ENCODE measurements at regions of chr19 and their contacts with region 1.

Region 1: DNA sequence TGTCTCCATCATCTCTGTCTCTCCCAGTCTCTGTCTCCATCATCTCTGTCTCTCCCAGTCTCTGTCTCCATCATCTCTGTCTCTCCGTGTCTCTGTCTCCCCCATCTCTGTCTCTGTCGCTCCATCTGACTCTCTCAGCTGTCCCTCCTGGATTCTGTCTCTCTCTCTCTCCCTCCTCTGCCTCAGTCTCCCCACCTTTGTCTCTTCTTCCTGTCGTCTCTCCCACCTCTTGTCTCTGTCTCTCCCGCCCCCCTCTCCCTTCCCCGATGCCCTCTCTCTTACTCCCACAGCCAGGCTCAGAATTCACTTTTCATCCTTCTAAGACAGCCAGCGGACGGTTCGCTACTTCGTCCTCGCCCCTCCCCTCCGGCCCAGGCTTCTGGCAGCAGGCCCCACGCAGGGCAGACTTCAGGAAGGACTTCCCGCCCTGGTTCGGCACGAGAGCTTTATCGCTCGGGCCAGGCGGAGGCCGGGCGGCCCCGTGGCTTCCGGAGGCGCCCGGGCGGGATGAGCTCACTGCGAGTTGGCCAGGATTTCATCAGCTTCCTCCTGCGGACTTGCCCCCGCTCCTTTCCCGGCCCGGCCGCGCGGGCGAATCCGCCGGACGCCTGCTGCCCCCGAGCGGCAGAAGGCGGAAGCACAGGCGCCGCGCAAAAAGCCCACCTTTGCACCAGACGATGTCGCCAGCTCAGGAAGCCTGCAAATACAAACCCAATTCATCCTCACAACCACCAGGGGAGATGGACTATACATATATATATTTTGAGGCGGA is 12.4 kb upstream of the CCDC9 start:
- DNase-seq: peak; percentile 72 to 95 (median 86)
- ATAC-seq: peak; percentile 42
- H3K4me3 ChIP-seq: peak overlapping the region; percentile 35
- H3K4me3 Mint-ChIP-seq: peak overlapping the region; percentile 85
- H3K27ac ChIP-seq: peak overlapping the region; percentile 45 to 65
- H3K27ac Mint-ChIP-seq: no peak overlapping the region
- H3K4me1 ChIP-seq: peaks cover 62% of the 10 kb centered on the region
- H3K4me1 Mint-ChIP-seq: peaks cover 15% of the 10 kb centered on the region
- H3K27me3 ChIP-seq: no peaks in the 10 kb centered on the region
- H3K27me3 Mint-ChIP-seq: no peaks in the 10 kb centered on the region
- CTCF ChIP-seq: peak; percentile 98

Region 2: DNA sequence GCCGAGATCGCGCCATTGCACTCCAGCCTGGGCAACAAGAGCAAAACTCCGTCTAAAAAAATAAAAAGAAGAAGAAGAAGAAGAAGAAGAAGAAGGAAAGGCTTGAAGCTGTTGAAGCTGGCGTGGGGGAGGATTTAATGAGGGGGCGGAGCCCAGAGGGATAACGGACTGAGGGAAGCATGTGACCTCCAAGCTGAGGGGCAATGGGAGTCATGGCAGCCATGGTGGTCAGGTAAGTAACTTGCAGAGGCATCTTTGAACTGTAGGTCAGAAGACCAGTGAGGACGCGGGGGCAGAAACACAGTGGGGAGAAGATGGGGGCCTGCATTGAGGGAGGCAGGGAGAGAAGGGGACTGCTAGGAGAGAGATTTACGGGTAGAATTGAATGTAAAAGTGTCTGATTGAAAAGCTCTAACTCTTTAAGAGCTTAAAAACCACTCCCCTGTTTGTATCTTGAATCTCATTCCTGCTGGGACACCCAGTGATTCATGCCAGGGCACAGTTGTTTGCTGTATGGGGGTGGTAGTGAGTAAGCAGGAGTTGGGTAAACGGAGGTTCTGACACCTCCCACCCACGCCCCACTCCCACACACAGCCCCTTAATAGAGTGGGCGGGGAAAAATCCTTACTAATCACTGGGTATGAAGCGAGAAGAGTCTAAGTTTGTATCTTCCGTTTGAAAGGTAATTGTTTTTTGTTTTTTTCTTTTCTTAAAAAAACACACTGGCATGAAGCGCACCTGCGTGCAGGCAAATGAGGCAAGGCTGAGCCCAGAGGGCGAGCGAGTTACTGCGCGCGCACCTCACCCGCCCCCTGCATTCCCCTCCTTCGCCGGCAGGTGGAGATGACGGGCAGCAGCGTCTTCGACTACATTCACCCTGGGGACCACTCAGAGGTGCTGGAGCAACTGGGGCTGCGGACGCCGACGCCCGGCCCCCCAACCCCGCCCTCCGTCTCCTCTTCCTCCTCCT is 208.6 kb before region 1 on chr19:
- CTCF ChIA-PET with region 1: interaction called, 4 read pairs
- POLR2A ChIA-PET with region 1: no interaction called
- intact Hi-C with region 1: loop called in 1 of 2 experiments (anchors 5 kb)
- DNase-seq: peak; percentile 88 to 99 (median 95)
- ATAC-seq: peak; percentile 96
- H3K4me3 ChIP-seq: peak overlapping the region; percentile 51
- H3K4me3 Mint-ChIP-seq: peak overlapping the region; percentile 94
- H3K27ac ChIP-seq: no peak overlapping the region
- H3K27ac Mint-ChIP-seq: peak overlapping the region; percentile 85
- H3K4me1 ChIP-seq: peaks cover 30% of the 10 kb centered on the region
- H3K4me1 Mint-ChIP-seq: peaks cover 15% of the 10 kb centered on the region
- H3K27me3 ChIP-seq: peaks cover 4 to 5% of the 10 kb centered on the region in 2 experiments
- H3K27me3 Mint-ChIP-seq: peaks cover 23% of the 10 kb centered on the region
- CTCF ChIP-seq: peak; percentile 98

Region 3: DNA sequence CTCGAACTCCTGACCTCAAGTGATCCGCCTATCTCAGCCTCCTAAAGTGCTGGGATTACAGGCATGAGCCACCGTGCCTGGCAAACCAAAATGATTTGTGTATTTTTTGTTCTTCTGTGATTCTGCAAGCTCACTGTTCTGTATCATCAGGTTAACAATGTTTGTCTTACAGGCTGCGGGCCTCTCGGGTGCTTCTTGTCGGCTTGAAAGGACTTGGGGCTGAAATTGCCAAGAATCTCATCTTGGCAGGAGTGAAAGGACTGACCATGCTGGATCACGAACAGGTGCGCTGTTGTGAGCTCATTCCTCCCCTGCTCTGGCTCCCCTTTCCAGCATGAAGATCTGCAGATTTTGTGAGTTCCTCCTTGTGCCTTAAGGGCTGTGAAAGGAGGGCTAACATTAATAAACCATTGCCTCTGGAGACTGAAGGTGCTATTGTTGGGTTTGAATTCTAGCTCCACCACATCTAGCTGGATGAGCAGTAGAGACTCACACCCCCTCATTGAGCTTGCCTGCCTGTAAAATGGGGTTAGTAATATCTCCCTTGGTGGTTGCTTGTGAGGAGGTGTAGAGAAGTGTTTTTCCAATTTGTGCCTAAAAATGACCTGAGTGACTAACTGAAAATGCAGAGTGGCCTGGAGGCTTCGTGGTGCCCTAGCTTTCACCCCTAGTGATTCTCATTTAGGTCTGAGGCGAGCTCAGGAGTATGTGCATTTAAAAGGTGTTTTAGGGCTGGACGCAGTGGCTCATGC is 100.5 kb before region 1 on chr19:
- CTCF ChIA-PET with region 1: interaction called, 67 read pairs
- POLR2A ChIA-PET with region 1: interaction called, 22 read pairs
- intact Hi-C with region 1: no loop called
- DNase-seq: no peak
- ATAC-seq: no peak
- H3K4me3 ChIP-seq: no peak overlapping the region
- H3K4me3 Mint-ChIP-seq: no peak overlapping the region
- H3K27ac ChIP-seq: no peak overlapping the region
- H3K27ac Mint-ChIP-seq: no peak overlapping the region
- H3K4me1 ChIP-seq: peaks cover 42% of the 10 kb centered on the region
- H3K4me1 Mint-ChIP-seq: peaks cover 56% of the 10 kb centered on the region
- H3K27me3 ChIP-seq: no peaks in the 10 kb centered on the region
- H3K27me3 Mint-ChIP-seq: no peaks in the 10 kb centered on the region
- CTCF ChIP-seq: no peak

Region 4: DNA sequence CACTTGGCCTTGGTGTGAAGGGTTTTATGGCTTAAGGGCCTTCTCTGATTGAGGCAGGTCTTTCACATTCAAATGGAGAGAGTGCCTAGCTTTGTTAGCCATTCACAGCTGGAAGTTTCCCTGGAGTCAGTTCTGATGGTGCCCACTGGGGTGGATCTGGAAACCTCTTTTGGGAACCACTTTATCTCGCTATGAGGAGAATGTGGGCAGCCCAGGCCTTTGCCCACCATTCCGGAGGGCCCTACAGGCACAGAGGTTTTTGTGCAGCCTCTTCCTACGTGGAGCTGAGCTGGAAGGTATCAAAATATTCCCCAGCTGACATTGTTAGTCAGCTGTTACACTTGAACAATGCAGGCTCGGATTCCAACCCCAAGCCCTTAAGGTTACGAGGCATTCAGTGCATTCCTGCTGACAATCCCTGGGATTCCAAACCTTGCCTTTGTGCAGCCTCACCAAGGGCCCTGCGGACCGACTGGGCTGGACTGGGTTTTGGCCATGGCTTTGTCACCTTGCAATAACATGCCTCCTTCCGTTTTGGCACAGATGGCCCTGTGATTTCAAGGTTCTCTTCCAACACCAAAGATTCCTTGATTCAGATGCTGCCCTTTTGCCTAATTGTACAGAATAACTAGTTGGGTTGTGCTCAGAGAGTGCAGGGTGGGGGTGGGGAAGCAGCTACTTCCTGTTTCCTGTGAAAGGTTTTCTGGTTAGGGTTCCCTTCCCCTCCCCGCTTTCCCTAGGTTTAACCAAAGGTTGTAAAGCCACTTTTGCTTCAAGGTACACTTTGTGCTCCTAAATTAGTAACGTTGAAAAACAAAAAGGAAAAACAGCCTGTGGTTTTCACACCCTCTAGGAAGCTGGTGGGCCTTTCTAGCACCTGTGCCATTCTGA is 86.3 kb before region 1 on chr19:
- CTCF ChIA-PET with region 1: interaction called, 59 read pairs
- POLR2A ChIA-PET with region 1: interaction called, 34 read pairs
- intact Hi-C with region 1: no loop called
- DNase-seq: peak in 12 of 14 experiments; percentile 21 to 84 (median 42)
- ATAC-seq: peak; percentile 15
- H3K4me3 ChIP-seq: peak overlapping the region; percentile 31
- H3K4me3 Mint-ChIP-seq: peak overlapping the region; percentile 81
- H3K27ac ChIP-seq: peak overlapping the region; percentile 42 to 64
- H3K27ac Mint-ChIP-seq: peak overlapping the region; percentile 85
- H3K4me1 ChIP-seq: peaks cover 73% of the 10 kb centered on the region
- H3K4me1 Mint-ChIP-seq: peaks cover 71% of the 10 kb centered on the region
- H3K27me3 ChIP-seq: no peaks in the 10 kb centered on the region
- H3K27me3 Mint-ChIP-seq: no peaks in the 10 kb centered on the region
- CTCF ChIP-seq: no peak

Region 5: GRCh38 chr19:47190167-47190727 is 53.7 kb before region 1 on chr19:
- CTCF ChIA-PET with region 1: interaction called, 26 read pairs
- POLR2A ChIA-PET with region 1: interaction called, 9 read pairs
- intact Hi-C with region 1: no loop called
- DNase-seq: peak; percentile 34 to 80 (median 64)
- ATAC-seq: peak; percentile 53
- H3K4me3 ChIP-seq: no peak overlapping the region
- H3K4me3 Mint-ChIP-seq: peak overlapping the region; percentile 49
- H3K27ac ChIP-seq: peak overlapping the region; percentile 0 to 36
- H3K27ac Mint-ChIP-seq: peak overlapping the region; percentile 90
- H3K4me1 ChIP-seq: peaks cover 82% of the 10 kb centered on the region
- H3K4me1 Mint-ChIP-seq: peaks cover 58% of the 10 kb centered on the region
- H3K27me3 ChIP-seq: no peaks in the 10 kb centered on the region
- H3K27me3 Mint-ChIP-seq: no peaks in the 10 kb centered on the region
- CTCF ChIP-seq: no peak

Region 6: GRCh38 chr19:47225746-47226425 is 18.1 kb before region 1 on chr19:
- CTCF ChIA-PET with region 1: interaction called, 63 read pairs
- POLR2A ChIA-PET with region 1: interaction called, 49 read pairs
- intact Hi-C with region 1: loop called (anchors 1 kb)
- DNase-seq: peak; percentile 79 to 95 (median 86)
- ATAC-seq: peak; percentile 54
- H3K4me3 ChIP-seq: peak overlapping the region; percentile 56
- H3K4me3 Mint-ChIP-seq: peak overlapping the region; percentile 72
- H3K27ac ChIP-seq: peak overlapping the region in 1 of 2 donors; percentile 85
- H3K27ac Mint-ChIP-seq: peak overlapping the region; percentile 85
- H3K4me1 ChIP-seq: peaks cover 48% of the 10 kb centered on the region
- H3K4me1 Mint-ChIP-seq: peaks cover 15% of the 10 kb centered on the region
- H3K27me3 ChIP-seq: no peaks in the 10 kb centered on the region
- H3K27me3 Mint-ChIP-seq: no peaks in the 10 kb centered on the region
- CTCF ChIP-seq: no peak

Region 7: GRCh38 chr19:47256688-47257443 is 12.9 kb after region 1 on chr19:
- CTCF ChIA-PET with region 1: interaction called, 17 read pairs
- POLR2A ChIA-PET with region 1: interaction called, 40 read pairs
- intact Hi-C with region 1: no loop called
- DNase-seq: peak; percentile 96 to 100 (median 98)
- ATAC-seq: peak; percentile 77
- H3K4me3 ChIP-seq: peak overlapping the region; percentile 72
- H3K4me3 Mint-ChIP-seq: peak overlapping the region; percentile 84
- H3K27ac ChIP-seq: peak overlapping the region; percentile 69 to 91
- H3K27ac Mint-ChIP-seq: peak overlapping the region; percentile 97
- H3K4me1 ChIP-seq: peaks cover 30% of the 10 kb centered on the region
- H3K4me1 Mint-ChIP-seq: peaks cover 39% of the 10 kb centered on the region
- H3K27me3 ChIP-seq: no peaks in the 10 kb centered on the region
- H3K27me3 Mint-ChIP-seq: no peaks in the 10 kb centered on the region
- CTCF ChIP-seq: no peak

Region 8: DNA sequence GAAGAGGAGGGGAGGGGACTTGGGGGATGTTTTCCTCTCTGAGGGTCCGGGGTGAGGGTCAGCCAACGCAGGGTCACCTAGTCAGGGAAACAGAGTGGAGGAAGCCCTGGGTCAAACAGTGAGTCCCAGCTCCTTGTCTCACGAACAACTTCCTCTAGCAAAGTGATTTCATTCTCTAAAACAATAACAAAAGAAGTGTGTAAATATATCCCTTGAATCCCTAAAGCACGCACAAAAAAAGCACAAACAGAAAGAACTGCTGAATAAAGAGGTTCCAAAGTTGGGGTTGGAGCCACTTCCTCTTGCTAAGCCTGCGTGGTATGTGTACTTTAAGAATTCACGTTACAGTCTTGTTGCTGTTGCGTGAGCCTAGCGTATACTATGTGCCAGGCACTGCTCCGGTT is 86.5 kb after region 1 on chr19:
- CTCF ChIA-PET with region 1: no interaction called
- POLR2A ChIA-PET with region 1: no interaction called
- intact Hi-C with region 1: no loop called
- DNase-seq: no peak
- ATAC-seq: no peak
- H3K4me3 ChIP-seq: no peak overlapping the region
- H3K4me3 Mint-ChIP-seq: no peak overlapping the region
- H3K27ac ChIP-seq: no peak overlapping the region
- H3K27ac Mint-ChIP-seq: no peak overlapping the region
- H3K4me1 ChIP-seq: peaks cover 5% of the 10 kb centered on the region
- H3K4me1 Mint-ChIP-seq: no peaks in the 10 kb centered on the region
- H3K27me3 ChIP-seq: no peaks in the 10 kb centered on the region
- H3K27me3 Mint-ChIP-seq: peaks cover 8% of the 10 kb centered on the region
- CTCF ChIP-seq: no peak

Region 9: DNA sequence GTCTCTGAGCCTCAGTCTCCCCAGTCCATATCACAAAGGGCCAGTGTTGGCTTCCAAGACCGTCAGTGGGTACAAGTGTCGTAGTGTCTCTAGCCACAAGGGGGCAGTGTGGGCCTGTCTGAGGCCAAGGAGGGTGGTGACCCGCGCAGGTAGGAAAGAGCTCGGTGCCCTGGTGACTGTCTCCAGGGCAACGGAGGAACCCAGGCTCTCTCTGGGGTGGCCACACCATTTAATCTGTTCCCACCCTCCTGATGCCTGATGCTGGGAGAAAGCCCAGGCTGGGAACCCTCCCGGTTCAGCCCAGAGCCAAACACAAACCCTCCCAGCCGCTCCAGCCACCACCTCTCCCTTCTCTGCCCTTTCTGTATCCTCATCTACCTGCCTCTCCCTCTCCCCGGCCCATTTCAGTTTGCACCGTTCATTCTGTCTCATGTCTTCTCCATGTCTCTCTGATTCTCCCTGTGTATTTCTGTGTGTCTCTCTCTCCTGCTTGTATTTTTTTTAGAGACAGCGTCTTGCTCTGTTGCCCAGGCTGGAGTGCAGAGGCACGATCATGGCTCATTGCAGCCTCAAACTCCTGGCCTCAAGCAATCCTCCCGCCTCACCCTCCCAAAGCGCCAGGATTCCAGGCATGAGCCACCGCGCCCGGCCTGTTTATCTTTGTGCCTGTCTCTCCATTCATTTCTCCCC is 192.9 kb after region 1 on chr19:
- CTCF ChIA-PET with region 1: no interaction called
- POLR2A ChIA-PET with region 1: no interaction called
- intact Hi-C with region 1: no loop called
- DNase-seq: peak; percentile 77 to 91 (median 81)
- ATAC-seq: peak; percentile 95
- H3K4me3 ChIP-seq: no peak overlapping the region
- H3K4me3 Mint-ChIP-seq: peak overlapping the region; percentile 11
- H3K27ac ChIP-seq: no peak overlapping the region
- H3K27ac Mint-ChIP-seq: no peak overlapping the region
- H3K4me1 ChIP-seq: peaks cover 15% of the 10 kb centered on the region
- H3K4me1 Mint-ChIP-seq: peaks cover 14% of the 10 kb centered on the region
- H3K27me3 ChIP-seq: peaks cover 21 to 24% of the 10 kb centered on the region in 2 experiments
- H3K27me3 Mint-ChIP-seq: peaks cover 74% of the 10 kb centered on the region
- CTCF ChIP-seq: peak; percentile 92